Caki2 (cell line): ENCODE measurements at regions of chr19 and their contacts with region 1.

Region 1: DNA sequence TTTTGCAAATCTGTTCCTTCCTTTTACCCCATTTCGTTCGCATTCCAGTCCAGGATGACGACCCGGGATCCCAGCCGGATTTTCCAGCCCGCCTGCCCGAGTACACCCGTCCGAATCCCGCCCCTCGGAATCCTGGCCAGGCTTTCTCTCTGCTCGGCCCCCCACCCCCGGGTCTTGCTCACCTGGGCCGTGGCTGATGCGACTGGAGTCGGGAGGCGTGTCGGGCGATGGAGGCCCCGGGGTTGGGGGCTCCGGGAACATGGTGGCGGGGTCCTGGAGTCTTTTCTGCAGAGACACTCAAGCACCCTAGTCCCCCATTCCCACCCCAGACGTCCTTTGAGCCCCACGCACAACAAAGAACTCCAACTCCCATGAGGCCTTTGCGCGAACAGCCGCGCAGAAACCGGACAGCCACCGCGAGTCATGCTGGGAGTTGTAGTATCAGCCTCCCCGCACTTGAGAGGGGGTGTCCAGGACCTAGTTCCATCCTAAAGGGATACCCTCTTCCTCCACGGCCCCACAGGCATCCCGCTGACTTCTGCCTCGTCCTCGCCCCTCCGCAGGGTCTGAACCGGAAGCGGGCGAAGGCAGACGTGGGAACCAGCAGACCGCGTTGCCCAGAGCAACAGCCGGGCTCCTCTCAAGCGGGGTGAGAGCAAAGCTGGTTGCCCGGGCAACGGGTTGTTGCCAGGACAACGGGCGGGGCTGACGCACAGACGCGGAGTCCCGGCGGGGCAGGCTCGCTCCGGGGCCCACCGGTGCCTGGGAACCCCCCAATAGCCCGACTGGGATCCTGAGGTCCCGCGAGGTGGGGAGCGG is 1.1 kb downstream of the SYT5 start:
- DNase-seq: no peak

Region 2: GRCh38 chr19:55080968-55081772 is 97.8 kb before region 1 on chr19:
- in situ Hi-C with region 1: no loop called
- DNase-seq: peak; percentile 83

Region 3: DNA sequence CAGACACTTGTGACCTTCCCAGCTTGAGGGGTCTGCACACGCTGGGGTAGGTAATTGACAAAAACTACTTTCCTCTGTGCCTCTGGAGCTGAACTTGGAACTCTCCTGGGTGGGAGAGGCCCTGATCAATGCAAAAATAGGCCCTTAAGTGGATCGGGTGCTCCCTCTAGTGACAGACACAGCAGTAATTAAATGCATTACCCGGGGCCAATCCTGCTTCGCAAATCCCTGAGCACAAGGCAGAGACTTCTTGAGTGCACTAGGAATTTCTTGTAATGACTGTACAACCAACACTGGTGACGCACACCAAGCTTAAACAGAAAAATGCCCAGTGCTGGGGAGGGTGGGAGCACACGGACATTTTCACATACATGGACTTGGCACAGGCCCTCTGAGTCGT is 239.2 kb after region 1 on chr19:
- in situ Hi-C with region 1: loop called (anchors 10 kb)
- DNase-seq: peak; percentile 64

Region 4: GRCh38 chr19:55624109-55625003 is 445.4 kb after region 1 on chr19 and contains the start of gene ZNF784:
- in situ Hi-C with region 1: loop called (anchors 10 kb)
- DNase-seq: peak; percentile 82
- total RNA-seq, gene ZNF784: 3.6 and 14.3 TPM in 2 replicates